Heart left ventricle (tissue), 16 donors: ENCODE measurements at regions of chr1 and their contacts with region 1.

Region 1: GRCh38 chr1:161045750-161046571 is at the start of gene USF1:
- DNase-seq: peak; percentile 93 to 96 (median 94)
- ATAC-seq: peak; percentile 97 to 98 (median 98)
- H3K4me3 ChIP-seq: peak within 1 kb of the TSS; percentile 69 to 99 (median 82)
- H3K27ac ChIP-seq: peak within 1 kb of the TSS; percentile 87 to 98 (median 96)
- H3K4me1 ChIP-seq: peaks cover 0 to 46% (median 15%) of the 10 kb centered on the region in 12 donors
- H3K27me3 ChIP-seq: no peaks in the 10 kb centered on the region
- CTCF ChIP-seq: peak in 1 of 12 donors; percentile 8
- POLR2A ChIP-seq: peak; percentile 18 to 67
- total RNA-seq, gene USF1: 20.2 to 51.1 (median 28.2) TPM

Region 2: GRCh38 chr1:161021165-161021960 is 24.6 kb before region 1 on chr1:
- intact Hi-C with region 1: loop called in 2 of 10 experiments (anchors 2 kb)
- DNase-seq: peak; percentile 77 to 84 (median 78)
- ATAC-seq: peak; percentile 85 to 92 (median 90)
- H3K4me3 ChIP-seq: peak overlapping the region; percentile 58 to 79 (median 66)
- H3K27ac ChIP-seq: peak overlapping the region in 11 of 12 donors; percentile 66 to 95 (median 87)
- H3K4me1 ChIP-seq: peaks cover 0 to 49% (median 19%) of the 10 kb centered on the region in 12 donors
- H3K27me3 ChIP-seq: peaks cover 0 to 4% (median 0%) of the 10 kb centered on the region in 9 donors
- CTCF ChIP-seq: no peak
- POLR2A ChIP-seq: peak in 1 of 2 donors; percentile 9

Region 3: DNA sequence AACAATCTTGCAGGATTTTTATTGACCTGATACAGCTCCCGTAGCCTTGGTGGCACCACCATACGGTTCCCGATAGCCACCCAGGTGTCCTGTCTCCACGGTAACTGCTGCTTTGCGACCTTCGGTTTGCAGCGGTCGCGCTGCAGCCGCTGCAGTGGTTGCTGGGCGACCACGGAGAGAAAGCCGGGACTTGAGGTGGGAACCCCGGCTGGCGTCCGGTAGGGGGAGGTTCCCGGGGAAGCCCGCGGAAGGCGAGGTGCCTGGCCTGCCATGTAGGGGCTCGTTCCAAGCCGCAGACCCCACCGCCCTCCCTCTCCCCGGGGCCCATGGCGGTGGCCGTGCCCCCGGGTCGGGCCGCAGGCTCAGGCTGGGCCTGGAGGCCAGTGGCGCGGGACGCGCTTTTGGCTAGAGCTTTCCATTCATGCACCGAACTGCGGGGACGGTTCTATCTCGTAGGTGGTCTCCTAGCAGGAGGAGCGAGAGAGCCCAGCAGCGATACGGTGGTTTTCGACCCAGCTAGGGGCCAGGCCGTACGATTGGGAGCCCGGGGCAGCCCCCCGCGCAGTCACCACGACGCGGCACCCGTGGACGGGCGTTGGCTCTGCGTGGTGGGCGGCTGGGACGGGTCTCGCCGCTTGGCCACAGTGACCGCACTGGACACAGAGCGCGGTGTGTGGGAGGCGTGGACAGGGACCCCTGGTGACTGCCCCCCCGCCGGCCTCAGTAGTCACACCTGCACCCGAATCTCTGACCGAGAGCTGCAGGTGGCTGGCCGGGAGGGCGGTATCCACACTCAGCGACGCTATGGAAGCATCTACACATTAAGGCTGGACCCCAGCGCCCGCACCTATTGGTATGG is 52.5 kb after region 1 on chr1 and contains the start of gene KLHDC9:
- intact Hi-C with region 1: loop called in 2 of 10 experiments (anchors 2 to 5 kb)
- DNase-seq: peak; percentile 79 to 88 (median 82)
- ATAC-seq: peak; percentile 80 to 90 (median 84)
- H3K4me3 ChIP-seq: peak within 1 kb of the TSS; percentile 49 to 81 (median 64)
- H3K27ac ChIP-seq: peak within 1 kb of the TSS in 11 of 12 donors; percentile 40 to 83 (median 71)
- H3K4me1 ChIP-seq: peaks cover 2 to 35% (median 17%) of the 10 kb centered on the region in 12 donors
- H3K27me3 ChIP-seq: no peaks in the 10 kb centered on the region
- CTCF ChIP-seq: peak in 1 of 12 donors; percentile 15
- POLR2A ChIP-seq: no peak
- total RNA-seq, gene KLHDC9: 2.4 to 13.3 (median 6.1) TPM

Region 4: GRCh38 chr1:161117759-161118581 is 72.0 kb after region 1 on chr1 and contains the starts of genes NIT1 and PFDN2:
- intact Hi-C with region 1: loop called in 1 of 10 experiments (anchors 1 kb)
- DNase-seq: peak; percentile 90 to 92 (median 90)
- ATAC-seq: peak; percentile 86 to 94 (median 90)
- H3K4me3 ChIP-seq: peak within 1 kb of the TSS; percentile 73 to 100 (median 94)
- H3K27ac ChIP-seq: peak within 1 kb of the TSS; percentile 77 to 97 (median 92)
- H3K4me1 ChIP-seq: peaks cover 5 to 84% (median 45%) of the 10 kb centered on the region in 12 donors
- H3K27me3 ChIP-seq: no peaks in the 10 kb centered on the region
- CTCF ChIP-seq: peak in 3 of 12 donors; percentile 12 to 19 (median 13)
- POLR2A ChIP-seq: peak; percentile 16 to 78
- total RNA-seq, gene NIT1: 28.1 to 42.7 (median 34.7) TPM
- total RNA-seq, gene PFDN2: 38.3 to 59.1 (median 49.4) TPM

Region 5: DNA sequence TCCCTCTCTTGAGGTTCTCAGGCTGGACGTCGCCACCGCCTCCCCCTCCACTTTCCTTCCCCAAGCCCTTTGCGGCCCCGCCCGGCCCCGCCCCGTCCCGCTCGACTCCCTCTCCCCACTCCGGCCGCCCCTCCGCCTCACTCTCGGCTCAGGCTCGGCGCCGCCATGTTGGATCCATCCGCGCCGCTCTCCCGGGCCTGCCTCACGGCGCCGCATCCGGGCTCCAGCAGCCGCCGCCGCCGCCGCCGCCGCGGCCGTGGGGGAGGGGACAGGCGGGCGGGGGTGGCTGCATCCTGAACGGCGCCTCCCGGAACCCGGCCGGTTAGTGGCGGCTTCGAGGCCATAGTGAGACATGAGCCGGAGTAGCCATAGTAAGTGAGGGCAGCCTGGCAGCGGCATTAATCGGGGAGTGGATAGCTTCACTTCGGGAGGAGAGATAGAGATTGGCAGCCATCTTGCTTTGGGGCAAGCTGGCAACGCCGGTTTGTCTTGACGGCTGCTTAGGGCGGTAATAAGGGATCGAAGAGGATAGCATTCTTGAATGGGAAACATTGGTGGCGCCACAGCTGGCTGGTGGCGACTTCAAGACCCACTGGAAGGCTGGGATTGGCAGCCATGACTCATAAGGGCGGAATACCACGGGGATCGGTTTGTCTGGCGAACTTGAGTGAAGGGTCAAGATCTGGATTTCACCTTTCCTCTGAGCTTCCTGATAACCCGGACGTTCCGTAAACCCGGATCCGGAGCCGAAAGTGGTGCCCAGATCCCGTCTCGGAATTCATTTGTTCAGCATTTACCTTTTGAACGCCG is 86.7 kb after region 1 on chr1 and contains the start of gene DEDD:
- intact Hi-C with region 1: loop called in 4 of 10 experiments (anchors 1 to 10 kb)
- DNase-seq: peak; percentile 95 to 97 (median 96)
- ATAC-seq: peak; percentile 93 to 97 (median 96)
- H3K4me3 ChIP-seq: peak within 1 kb of the TSS; percentile 42 to 92 (median 71)
- H3K27ac ChIP-seq: peak within 1 kb of the TSS; percentile 87 to 99 (median 97)
- H3K4me1 ChIP-seq: peaks cover 5 to 74% (median 41%) of the 10 kb centered on the region in 12 donors
- H3K27me3 ChIP-seq: no peaks in the 10 kb centered on the region
- CTCF ChIP-seq: peak in 3 of 12 donors; percentile 9 to 30 (median 22)
- POLR2A ChIP-seq: peak in 1 of 2 donors; percentile 48
- total RNA-seq, gene DEDD: 20.8 to 36.0 (median 26.5) TPM